SK-N-SH (cell line): ENCODE measurements at regions of chr2 and their contacts with region 1.

Region 1: GRCh38 chr2:20326163-20326780 is 24.4 kb downstream of the PUM2 start:
- DNase-seq: peak; percentile 74
- H3K4me3 ChIP-seq: no peak overlapping the region
- H3K27ac ChIP-seq: peak overlapping the region; percentile 18 to 33; a peak in 2 of 4 replicates
- H3K4me1 ChIP-seq: peaks cover 0 to 7% of the 10 kb centered on the region in 2 experiments; a peak in 2 of 4 replicates
- H3K27me3 ChIP-seq: no peaks in the 10 kb centered on the region
- CTCF ChIP-seq: peak; percentile 99
- EP300 ChIP-seq: no peak
- RAD21 ChIP-seq: peak; percentile 81

Region 2: DNA sequence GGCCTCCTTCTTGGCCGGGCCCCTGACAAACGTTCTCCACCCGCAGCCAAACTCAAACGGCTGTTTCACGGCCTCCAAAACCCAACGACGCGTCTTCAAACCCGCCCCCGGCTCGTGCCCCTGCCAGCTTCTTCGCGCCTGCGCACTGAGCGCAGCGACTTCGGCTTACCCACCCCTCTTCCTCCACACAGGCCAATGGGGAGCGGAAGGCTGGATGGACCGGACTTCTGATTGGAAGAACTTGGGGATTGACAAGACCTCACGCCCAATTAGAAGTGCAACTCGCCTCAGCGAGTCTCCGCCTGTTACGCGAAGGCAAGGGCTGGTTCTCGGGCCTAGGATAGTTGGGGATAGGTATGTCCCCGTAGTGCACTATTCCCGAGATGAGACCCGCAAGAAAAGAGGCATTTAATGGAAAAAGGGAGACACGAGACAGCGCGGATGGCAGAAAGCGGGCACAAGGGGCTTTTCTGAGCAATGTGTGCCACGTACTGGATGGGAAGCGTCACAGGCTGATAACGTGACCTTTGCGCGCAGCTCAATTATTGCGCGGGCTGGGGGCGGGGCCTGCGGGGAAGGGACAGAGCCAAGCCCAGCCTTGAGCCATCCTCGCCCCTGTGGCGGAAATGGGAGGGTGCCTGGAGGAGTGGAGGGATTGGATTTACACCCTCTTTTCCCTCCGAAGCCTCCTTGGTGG is 274.6 kb before region 1 on chr2 and contains the start of gene LAPTM4A:
- CTCF ChIA-PET with region 1: no interaction called
- POLR2A ChIA-PET with region 1: no interaction called
- DNase-seq: peak; percentile 98
- H3K4me3 ChIP-seq: peak within 1 kb of the TSS; percentile 72 to 99
- H3K27ac ChIP-seq: peak within 1 kb of the TSS; percentile 98 to 100
- H3K4me1 ChIP-seq: peaks cover 11 to 30% of the 10 kb centered on the region in 2 experiments; a peak in 3 of 4 replicates
- H3K27me3 ChIP-seq: no peaks in the 10 kb centered on the region
- CTCF ChIP-seq: no peak
- EP300 ChIP-seq: no peak; a peak in 1 of 4 replicates
- RAD21 ChIP-seq: peak; percentile 17; the same call in 1 of the 2 replicates
- polyA plus RNA-seq, gene LAPTM4A: 306 and 350 TPM in 2 replicates

Region 3: DNA sequence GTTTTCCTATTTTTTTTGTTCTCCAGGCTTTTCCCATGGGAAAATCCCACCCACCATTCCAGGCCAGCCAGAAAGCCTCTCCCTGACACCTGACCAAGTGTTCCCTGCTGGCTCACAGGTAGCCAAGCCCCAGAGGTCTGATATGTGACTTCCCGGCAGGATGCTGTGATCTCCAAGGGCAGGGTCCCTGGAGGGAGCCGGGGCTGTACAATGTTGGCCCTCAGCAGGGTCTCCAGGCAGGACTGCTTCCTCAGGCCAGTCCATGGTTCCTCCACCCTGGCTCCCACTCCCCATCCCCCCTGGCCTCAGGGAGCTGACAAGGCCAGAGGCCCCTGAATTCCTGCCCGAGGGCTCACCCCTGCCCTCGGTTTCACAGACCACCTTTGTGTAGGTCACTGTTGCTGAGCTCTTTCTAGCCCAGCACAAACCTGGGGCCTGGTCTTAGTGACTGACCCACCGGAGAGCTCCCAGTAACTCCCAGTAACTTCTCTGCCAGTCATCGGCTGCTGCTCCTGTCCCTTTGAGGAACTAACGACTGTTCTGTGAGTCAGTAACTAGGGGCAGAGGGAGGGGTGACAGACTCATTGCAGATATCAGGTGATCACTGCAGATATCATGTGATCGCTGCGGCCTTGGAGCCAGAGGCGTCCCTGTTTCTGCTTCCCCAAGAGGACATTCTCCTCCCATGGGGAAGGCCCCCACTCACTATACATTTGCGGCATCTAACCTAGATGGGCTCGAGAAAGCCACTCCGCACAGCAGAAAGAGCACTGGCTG is 140.0 kb before region 1 on chr2:
- CTCF ChIA-PET with region 1: no interaction called
- POLR2A ChIA-PET with region 1: no interaction called
- DNase-seq: no peak
- H3K4me3 ChIP-seq: no peak overlapping the region
- H3K27ac ChIP-seq: peak overlapping the region in 1 of 2 experiments; percentile 55; a peak in 2 of 4 replicates
- H3K4me1 ChIP-seq: peaks cover 19 to 32% of the 10 kb centered on the region in 2 experiments; a peak in 2 of 4 replicates
- H3K27me3 ChIP-seq: no peaks in the 10 kb centered on the region
- CTCF ChIP-seq: no peak
- EP300 ChIP-seq: no peak
- RAD21 ChIP-seq: no peak

Region 4: GRCh38 chr2:20291106-20291564 is 35.1 kb before region 1 on chr2:
- CTCF ChIA-PET with region 1: interaction called, 69 read pairs
- POLR2A ChIA-PET with region 1: no interaction called
- DNase-seq: peak; percentile 79
- H3K4me3 ChIP-seq: no peak overlapping the region
- H3K27ac ChIP-seq: peak overlapping the region; percentile 37 to 64
- H3K4me1 ChIP-seq: peaks cover 0 to 7% of the 10 kb centered on the region in 2 experiments; a peak in 2 of 4 replicates
- H3K27me3 ChIP-seq: no peaks in the 10 kb centered on the region
- CTCF ChIP-seq: peak; percentile 89
- EP300 ChIP-seq: no peak
- RAD21 ChIP-seq: peak; percentile 74

Region 5: GRCh38 chr2:20304411-20304810 is 21.9 kb before region 1 on chr2:
- CTCF ChIA-PET with region 1: interaction called, 124 read pairs
- POLR2A ChIA-PET with region 1: no interaction called
- DNase-seq: no peak
- H3K4me3 ChIP-seq: no peak overlapping the region
- H3K27ac ChIP-seq: peak overlapping the region in 1 of 2 experiments; percentile 49; a peak in 2 of 4 replicates
- H3K4me1 ChIP-seq: peaks cover 6 to 33% of the 10 kb centered on the region in 2 experiments; a peak in 3 of 4 replicates
- H3K27me3 ChIP-seq: no peaks in the 10 kb centered on the region
- CTCF ChIP-seq: no peak
- EP300 ChIP-seq: peak in 1 of 2 experiments; percentile 56; a peak in 1 of 4 replicates
- RAD21 ChIP-seq: no peak

Region 6: DNA sequence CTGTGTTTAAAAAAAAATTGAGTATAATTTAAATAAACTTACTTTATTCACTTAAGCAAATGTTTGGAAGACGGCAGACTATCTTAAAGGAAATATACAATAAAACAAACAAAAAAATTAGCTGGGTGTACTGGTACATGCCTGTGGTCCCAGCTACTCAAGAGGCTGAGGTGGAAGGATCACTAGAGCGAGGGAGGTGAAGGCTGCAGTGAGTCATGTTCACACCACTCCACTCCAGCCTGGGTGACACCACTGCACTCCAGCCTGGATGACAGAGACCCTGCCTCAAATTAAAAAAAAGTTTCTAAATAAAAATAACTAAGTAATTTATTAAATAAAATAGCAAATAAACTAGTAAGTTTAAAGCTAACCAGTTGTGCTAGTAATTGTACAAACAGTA is 16.9 kb after region 1 on chr2:
- CTCF ChIA-PET with region 1: interaction called, 128 read pairs
- POLR2A ChIA-PET with region 1: no interaction called
- DNase-seq: no peak
- H3K4me3 ChIP-seq: no peak overlapping the region
- H3K27ac ChIP-seq: no peak overlapping the region
- H3K4me1 ChIP-seq: peaks cover 0 to 10% of the 10 kb centered on the region in 2 experiments; a peak in 2 of 4 replicates
- H3K27me3 ChIP-seq: no peaks in the 10 kb centered on the region
- CTCF ChIP-seq: no peak
- EP300 ChIP-seq: no peak
- RAD21 ChIP-seq: no peak

Region 7: DNA sequence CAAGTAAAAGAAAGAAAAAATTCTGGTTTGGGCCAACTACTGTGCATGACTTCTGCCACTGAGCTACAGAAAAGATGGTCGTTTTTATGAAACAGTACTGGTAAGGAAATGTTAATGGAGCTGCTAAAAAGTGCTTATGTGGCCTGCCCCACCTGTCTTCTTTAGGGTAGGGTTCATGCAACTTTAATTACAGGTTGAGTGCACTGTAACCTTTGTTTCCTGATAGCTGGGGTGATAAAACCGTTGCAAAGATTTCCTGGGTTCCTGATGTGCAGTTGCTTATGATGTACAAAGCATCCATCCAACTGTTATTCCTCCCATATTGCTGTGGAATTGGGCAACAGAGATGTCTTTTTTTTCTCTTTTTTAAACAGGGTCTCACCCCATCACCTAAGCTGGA is 58.7 kb after region 1 on chr2:
- CTCF ChIA-PET with region 1: no interaction called
- POLR2A ChIA-PET with region 1: no interaction called
- DNase-seq: no peak
- H3K4me3 ChIP-seq: no peak overlapping the region
- H3K27ac ChIP-seq: no peak overlapping the region
- H3K4me1 ChIP-seq: peaks cover 0 to 10% of the 10 kb centered on the region in 2 experiments; a peak in 1 of 4 replicates
- H3K27me3 ChIP-seq: peaks cover 9% of the 10 kb centered on the region; the same call in 1 of the 2 replicates
- CTCF ChIP-seq: no peak
- EP300 ChIP-seq: no peak
- RAD21 ChIP-seq: no peak